Right cardiac atrium (tissue), 5 donors: ENCODE measurements at regions of chr6 and their contacts with region 1.

Region 1: DNA sequence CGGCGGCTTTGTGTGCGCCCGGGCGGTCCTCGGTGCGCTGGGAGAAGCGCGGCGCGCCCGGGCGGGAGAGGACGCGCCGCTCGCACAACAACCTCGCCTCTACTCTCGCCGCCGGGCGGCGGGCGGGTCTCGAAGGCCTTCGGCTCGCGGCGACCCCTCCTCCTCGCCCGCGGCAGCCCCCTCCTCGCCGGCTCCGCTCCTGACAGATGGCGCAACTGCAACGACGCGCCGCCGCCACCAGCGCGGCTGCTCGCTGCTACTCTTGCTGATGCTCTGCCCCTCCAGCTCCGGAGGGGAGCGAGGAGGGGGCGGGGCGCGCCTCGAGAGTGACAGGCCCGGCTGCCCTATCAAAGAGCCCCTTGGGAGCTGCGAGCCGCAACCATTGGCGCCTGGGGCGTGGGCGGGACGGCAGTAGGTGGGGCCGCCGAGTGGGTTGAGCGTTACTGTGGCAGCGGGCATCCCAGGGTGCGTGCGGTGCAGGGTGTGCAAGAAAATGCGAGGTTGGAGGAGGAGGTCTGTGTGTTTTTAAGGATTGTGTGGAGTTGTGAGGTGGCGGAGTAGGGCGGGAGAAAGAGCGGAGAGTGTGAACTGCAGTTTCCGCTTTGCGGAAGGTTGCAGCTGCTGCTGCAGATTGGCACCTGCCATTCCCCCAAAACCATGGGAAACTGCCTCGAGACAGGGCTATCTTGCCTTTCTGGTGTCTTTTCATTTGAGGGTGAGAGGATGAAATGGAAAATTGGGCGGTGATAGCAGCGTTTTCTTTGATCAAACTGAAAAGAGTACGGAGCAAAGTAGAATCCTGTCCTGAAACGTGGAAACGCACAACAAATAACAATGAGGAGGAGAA is at the start of gene FYN:
- DNase-seq: peak; percentile 98 to 100 (median 99)
- ATAC-seq: peak; percentile 98 to 99
- H3K4me3 ChIP-seq: peak within 1 kb of the TSS; percentile 99
- H3K27ac ChIP-seq: peak within 1 kb of the TSS; percentile 87
- H3K4me1 ChIP-seq: peaks cover 3% of the 10 kb centered on the region
- H3K27me3 ChIP-seq: no peaks in the 10 kb centered on the region
- total RNA-seq, gene FYN: 56.5 to 76.6 (median 73.5) TPM

Region 2: DNA sequence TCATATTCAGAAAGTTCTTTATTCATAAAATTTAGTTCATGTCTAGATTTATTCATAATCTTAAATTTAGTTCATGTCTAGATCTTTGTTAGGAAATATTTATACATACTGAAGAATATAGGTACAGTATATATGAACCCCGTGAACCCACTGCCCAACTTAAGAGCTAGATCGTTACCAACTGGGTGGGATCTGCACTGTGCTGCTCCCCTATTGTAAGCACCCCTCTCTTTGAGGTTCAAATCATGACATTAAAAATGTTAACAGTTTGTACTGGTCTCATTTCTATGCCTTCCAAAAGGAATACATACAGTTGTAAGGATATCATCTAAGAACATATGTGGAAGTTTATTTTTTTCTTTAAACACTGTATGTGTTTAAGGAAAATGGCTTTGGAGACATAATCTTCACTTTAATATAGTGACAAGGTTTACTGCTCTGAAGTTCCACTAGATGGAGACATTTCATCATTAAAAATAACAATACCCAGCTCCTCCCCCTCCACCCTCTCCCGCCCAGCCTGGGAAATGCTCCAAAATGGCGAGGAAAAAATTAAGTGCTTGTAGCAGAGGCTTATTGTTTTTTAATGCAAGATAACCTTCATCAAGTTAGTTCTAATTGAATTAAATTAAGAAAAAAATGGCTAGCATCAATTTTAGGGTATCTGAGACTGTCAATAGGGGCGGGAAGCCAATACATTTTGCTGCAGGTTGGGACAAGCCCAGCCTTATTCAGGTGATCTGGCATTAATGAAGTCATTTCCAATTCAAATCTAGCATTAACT is 163.6 kb before region 1 on chr6:
- intact Hi-C with region 1: loop called in 1 of 4 experiments (anchors 5 kb)
- DNase-seq: peak; percentile 65 to 79 (median 75)
- ATAC-seq: peak; percentile 76 to 84
- H3K4me3 ChIP-seq: no peak overlapping the region
- H3K27ac ChIP-seq: peak overlapping the region; percentile 76
- H3K4me1 ChIP-seq: peaks cover 9% of the 10 kb centered on the region
- H3K27me3 ChIP-seq: no peaks in the 10 kb centered on the region

Region 3: GRCh38 chr6:111721753-111722154 is 151.6 kb before region 1 on chr6:
- intact Hi-C with region 1: loop called in 2 of 4 experiments (anchors 5 to 10 kb)
- DNase-seq: peak in 1 of 3 donors; percentile 40
- ATAC-seq: peak; percentile 5 to 29
- H3K4me3 ChIP-seq: no peak overlapping the region
- H3K27ac ChIP-seq: peak overlapping the region; percentile 42
- H3K4me1 ChIP-seq: peaks cover 19% of the 10 kb centered on the region
- H3K27me3 ChIP-seq: no peaks in the 10 kb centered on the region

Region 4: GRCh38 chr6:111727802-111728201 is 145.6 kb before region 1 on chr6:
- intact Hi-C with region 1: loop called in 3 of 4 experiments (anchors 5 to 10 kb)
- DNase-seq: no peak
- ATAC-seq: no peak
- H3K4me3 ChIP-seq: no peak overlapping the region
- H3K27ac ChIP-seq: no peak overlapping the region
- H3K4me1 ChIP-seq: peaks cover 15% of the 10 kb centered on the region
- H3K27me3 ChIP-seq: no peaks in the 10 kb centered on the region

Region 5: DNA sequence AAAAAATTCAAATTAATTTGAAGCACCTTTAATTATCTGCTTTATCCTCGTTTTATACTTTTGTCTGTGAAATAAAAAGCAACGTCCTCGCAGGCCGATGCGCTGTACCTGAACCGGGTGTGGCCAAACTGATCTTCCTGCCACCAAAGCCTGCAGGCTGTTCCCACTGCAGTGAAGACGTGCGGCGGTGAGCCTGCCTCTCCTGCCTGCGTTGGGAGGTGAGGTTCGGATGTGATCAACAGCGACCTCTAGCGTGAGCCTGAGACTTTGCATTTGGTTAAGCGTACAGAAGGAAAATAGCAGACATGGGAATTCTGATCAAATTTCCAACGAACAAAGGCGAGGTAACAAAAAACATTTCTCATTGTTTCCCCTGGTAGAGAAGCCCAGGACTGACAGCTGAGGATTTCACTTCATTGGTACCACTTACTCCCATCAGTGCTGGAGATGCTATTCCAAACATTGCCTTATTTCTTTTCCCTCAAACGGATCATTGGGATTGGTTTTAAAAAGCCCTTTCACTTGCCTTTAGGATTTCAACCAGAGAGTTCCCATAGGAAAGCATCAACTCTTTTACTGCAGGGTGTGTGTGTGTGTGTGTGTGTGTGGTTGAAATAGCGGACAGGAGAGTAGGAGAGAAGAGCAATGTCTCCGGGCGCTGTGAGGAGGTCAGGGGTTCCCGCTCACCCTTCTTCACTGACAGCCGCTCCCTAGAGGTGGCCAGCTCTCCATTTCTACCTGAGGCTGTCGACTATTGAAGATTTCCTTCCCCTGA is 123.9 kb after region 1 on chr6:
- intact Hi-C with region 1: loop called in 1 of 4 experiments (anchors 5 kb)
- DNase-seq: peak; percentile 85 to 91 (median 91)
- ATAC-seq: peak; percentile 93
- H3K4me3 ChIP-seq: no peak overlapping the region
- H3K27ac ChIP-seq: peak overlapping the region; percentile 28
- H3K4me1 ChIP-seq: no peaks in the 10 kb centered on the region
- H3K27me3 ChIP-seq: no peaks in the 10 kb centered on the region

Region 6: GRCh38 chr6:112251171-112251875 is 377.9 kb after region 1 on chr6:
- intact Hi-C with region 1: no loop called
- DNase-seq: peak; percentile 63 to 85 (median 68)
- ATAC-seq: peak; percentile 67 to 83
- H3K4me3 ChIP-seq: peak overlapping the region; percentile 66
- H3K27ac ChIP-seq: peak overlapping the region; percentile 79
- H3K4me1 ChIP-seq: peaks cover 11% of the 10 kb centered on the region
- H3K27me3 ChIP-seq: no peaks in the 10 kb centered on the region